ENCODE measurements at regions of chr4 and their contacts with region 1.

Region 1: GRCh38 chr4:165493359-165493758 is 114.6 kb downstream of the CPE start:
- DNase-seq: peak; percentile 17 to 73 (median 59)
- ATAC-seq: peak; percentile 78
- H3K4me3 ChIP-seq: no peak overlapping the region
- H3K4me3 Mint-ChIP-seq: peak overlapping the region; percentile 48
- H3K27ac ChIP-seq: no peak overlapping the region
- H3K27ac Mint-ChIP-seq: no peak overlapping the region
- H3K4me1 ChIP-seq: peaks cover 4% of the 10 kb centered on the region
- H3K4me1 Mint-ChIP-seq: peaks cover 6% of the 10 kb centered on the region
- H3K27me3 ChIP-seq: no peaks in the 10 kb centered on the region
- H3K27me3 Mint-ChIP-seq: peaks cover 25% of the 10 kb centered on the region
- CTCF ChIP-seq: peak; percentile 60

Region 2: DNA sequence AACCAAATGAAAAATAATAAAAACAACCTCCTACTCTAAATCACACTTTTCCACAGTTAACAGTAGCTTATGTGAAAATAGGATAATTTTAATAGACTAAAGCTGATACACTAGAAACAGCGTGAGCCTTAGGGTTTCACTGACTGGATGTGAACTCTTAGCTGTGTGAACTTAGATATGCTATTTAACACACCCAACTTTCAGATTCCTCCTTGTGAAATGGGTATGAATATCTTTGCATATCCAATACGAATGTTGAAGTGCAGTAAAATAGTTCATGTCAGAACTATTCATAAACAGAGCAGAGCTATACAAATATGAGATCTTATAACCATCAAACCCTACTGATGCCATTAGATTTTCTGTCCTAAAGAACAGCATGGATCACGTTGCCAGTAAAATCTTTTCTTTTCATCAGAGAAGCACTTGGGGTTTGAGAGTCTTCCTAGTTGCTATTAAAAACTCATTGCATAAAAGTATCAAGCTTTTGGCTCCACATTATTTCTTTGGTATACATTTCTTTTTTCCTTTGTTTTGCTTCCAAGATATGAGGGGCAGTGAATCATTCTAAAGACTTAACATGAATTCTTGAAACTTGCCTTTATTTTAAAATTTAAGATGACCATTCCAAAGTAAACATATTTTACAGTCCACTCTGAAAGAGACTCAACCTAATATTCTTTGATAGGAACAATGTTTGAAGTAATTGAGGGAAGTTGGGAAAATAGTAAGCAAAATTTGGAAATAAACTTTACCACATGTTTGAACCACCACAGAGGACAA is 12.1 kb before region 1 on chr4:
- CTCF ChIA-PET with region 1: interaction called, 11 read pairs
- POLR2A ChIA-PET with region 1: no interaction called
- intact Hi-C with region 1: no loop called
- DNase-seq: no peak
- ATAC-seq: no peak
- H3K4me3 ChIP-seq: no peak overlapping the region
- H3K4me3 Mint-ChIP-seq: no peak overlapping the region
- H3K27ac ChIP-seq: no peak overlapping the region
- H3K27ac Mint-ChIP-seq: no peak overlapping the region
- H3K4me1 ChIP-seq: no peaks in the 10 kb centered on the region
- H3K4me1 Mint-ChIP-seq: no peaks in the 10 kb centered on the region
- H3K27me3 ChIP-seq: peaks cover 0 to 3% of the 10 kb centered on the region in 2 experiments
- H3K27me3 Mint-ChIP-seq: peaks cover 13% of the 10 kb centered on the region
- CTCF ChIP-seq: no peak

Region 3: DNA sequence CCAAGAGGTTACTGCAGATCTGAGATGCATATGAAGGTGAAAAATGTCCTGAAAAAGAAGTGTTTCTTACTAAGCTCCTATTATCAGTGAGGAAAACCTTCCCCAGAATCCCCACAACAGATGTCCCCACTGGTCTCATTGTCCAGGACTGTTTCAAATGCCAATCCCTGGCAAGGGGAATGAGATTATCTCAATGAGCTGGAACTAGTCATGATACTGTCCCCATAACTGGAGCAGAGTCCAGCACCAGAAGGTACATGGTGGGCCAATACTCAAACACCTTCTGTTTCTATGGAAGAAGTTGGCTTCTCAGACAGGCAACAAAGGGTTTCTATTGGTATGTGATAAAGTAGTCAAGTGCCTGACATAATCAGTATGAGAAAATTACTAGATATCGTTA is 158.5 kb after region 1 on chr4:
- CTCF ChIA-PET with region 1: no interaction called
- POLR2A ChIA-PET with region 1: no interaction called
- intact Hi-C with region 1: no loop called
- DNase-seq: no peak
- ATAC-seq: no peak
- H3K4me3 ChIP-seq: no peak overlapping the region
- H3K4me3 Mint-ChIP-seq: no peak overlapping the region
- H3K27ac ChIP-seq: no peak overlapping the region
- H3K27ac Mint-ChIP-seq: no peak overlapping the region
- H3K4me1 ChIP-seq: no peaks in the 10 kb centered on the region
- H3K4me1 Mint-ChIP-seq: no peaks in the 10 kb centered on the region
- H3K27me3 ChIP-seq: no peaks in the 10 kb centered on the region
- H3K27me3 Mint-ChIP-seq: no peaks in the 10 kb centered on the region
- CTCF ChIP-seq: no peak

Region 4: DNA sequence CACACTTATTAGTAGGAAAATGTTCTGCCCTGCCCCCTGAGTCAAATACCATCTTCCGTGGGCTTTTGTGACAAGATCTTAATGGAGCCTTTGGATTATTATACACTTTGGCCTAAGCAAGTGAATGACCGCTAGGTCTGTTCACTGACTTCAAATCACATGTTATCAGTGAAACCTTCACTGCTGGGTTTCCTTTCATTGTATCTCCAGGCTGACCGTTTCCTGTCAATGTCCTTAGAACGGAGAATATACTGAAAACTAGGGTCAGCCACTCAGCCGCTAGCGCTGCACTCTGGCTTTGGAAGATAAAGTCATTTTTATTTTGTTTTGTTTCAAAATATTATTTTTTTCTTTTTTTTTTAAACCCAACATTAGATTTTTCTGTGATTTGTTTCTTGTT is 272.7 kb after region 1 on chr4:
- CTCF ChIA-PET with region 1: no interaction called
- POLR2A ChIA-PET with region 1: no interaction called
- intact Hi-C with region 1: no loop called
- DNase-seq: no peak
- ATAC-seq: no peak
- H3K4me3 ChIP-seq: no peak overlapping the region
- H3K4me3 Mint-ChIP-seq: no peak overlapping the region
- H3K27ac ChIP-seq: no peak overlapping the region
- H3K27ac Mint-ChIP-seq: no peak overlapping the region
- H3K4me1 ChIP-seq: no peaks in the 10 kb centered on the region
- H3K4me1 Mint-ChIP-seq: no peaks in the 10 kb centered on the region
- H3K27me3 ChIP-seq: no peaks in the 10 kb centered on the region
- H3K27me3 Mint-ChIP-seq: no peaks in the 10 kb centered on the region
- CTCF ChIP-seq: no peak

Region 5: GRCh38 chr4:166091912-166092510 is 598.7 kb after region 1 on chr4:
- CTCF ChIA-PET with region 1: interaction called, 5 read pairs
- POLR2A ChIA-PET with region 1: no interaction called
- intact Hi-C with region 1: loop called in 1 of 2 experiments (anchors 2 kb)
- DNase-seq: peak in 2 of 9 experiments; percentile 5 to 29
- ATAC-seq: no peak
- H3K4me3 ChIP-seq: no peak overlapping the region
- H3K4me3 Mint-ChIP-seq: no peak overlapping the region
- H3K27ac ChIP-seq: no peak overlapping the region
- H3K27ac Mint-ChIP-seq: no peak overlapping the region
- H3K4me1 ChIP-seq: no peaks in the 10 kb centered on the region
- H3K4me1 Mint-ChIP-seq: no peaks in the 10 kb centered on the region
- H3K27me3 ChIP-seq: no peaks in the 10 kb centered on the region
- H3K27me3 Mint-ChIP-seq: no peaks in the 10 kb centered on the region
- CTCF ChIP-seq: peak; percentile 46